ENCODE measurements at regions of chr6 and their contacts with region 1.

Region 1: DNA sequence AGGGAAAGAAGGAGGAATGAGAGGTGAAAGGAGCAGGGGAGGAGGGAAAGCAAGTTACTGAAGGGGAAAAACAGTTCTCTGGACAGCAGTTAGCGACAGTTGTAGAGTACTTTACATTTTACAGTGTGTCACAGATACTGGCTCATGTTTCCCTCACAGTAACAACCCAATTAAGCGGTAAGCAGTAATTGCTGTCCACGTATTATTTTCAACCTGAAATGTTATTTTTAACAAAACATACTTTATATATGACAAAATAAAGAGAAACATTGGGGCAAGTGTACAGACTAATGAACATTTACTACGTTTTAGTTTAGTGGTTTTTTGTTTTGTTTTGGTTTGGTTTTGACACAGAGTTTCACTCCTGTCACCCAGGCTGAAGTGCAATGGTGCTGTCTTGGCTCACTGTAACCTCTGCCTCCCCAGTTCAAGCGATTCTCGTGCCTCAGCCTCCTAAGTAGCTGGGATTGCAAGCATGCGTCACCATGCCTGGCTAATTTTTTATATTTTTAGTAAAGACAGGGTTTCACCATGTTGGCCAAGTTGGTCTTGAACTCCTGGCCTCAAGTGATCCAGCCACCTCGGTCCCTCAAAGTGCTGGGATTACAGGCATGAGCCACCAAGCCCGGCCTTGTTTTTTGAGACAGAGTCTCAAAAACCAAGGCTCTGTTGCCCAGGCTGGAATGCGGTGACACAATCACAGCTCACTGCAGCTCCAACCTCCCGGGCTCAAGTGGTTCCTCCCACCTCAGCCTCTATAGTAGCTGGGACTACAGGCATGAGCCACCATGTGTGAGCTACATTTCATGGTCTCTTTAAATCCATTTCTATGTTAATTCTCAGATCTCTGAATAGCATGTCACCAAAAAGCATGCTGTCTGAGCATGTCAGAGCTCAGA is 22.6 kb upstream of the BTN3A2 start:
- DNase-seq: no peak
- H3K4me3 ChIP-seq: no peak overlapping the region
- H3K4me3 Mint-ChIP-seq: peak overlapping the region; percentile 72
- H3K27ac Mint-ChIP-seq: no peak overlapping the region
- H3K4me1 ChIP-seq: peaks cover 7% of the 10 kb centered on the region; the same call in 1 of the 2 replicates
- H3K4me1 Mint-ChIP-seq: peaks cover 7% of the 10 kb centered on the region
- H3K27me3 ChIP-seq: no peaks in the 10 kb centered on the region
- H3K27me3 Mint-ChIP-seq: no peaks in the 10 kb centered on the region
- CTCF ChIP-seq: no peak

Region 2: GRCh38 chr6:26473758-26474438 is 131.5 kb after region 1 on chr6:
- CTCF ChIA-PET with region 1: interaction called, 12 read pairs
- POLR2A ChIA-PET with region 1: no interaction called
- intact Hi-C with region 1: no loop called
- DNase-seq: peak; percentile 63 to 68
- H3K4me3 ChIP-seq: peak overlapping the region; percentile 39
- H3K4me3 Mint-ChIP-seq: peak overlapping the region; percentile 73
- H3K27ac Mint-ChIP-seq: peak overlapping the region; percentile 77
- H3K4me1 ChIP-seq: peaks cover 40% of the 10 kb centered on the region
- H3K4me1 Mint-ChIP-seq: peaks cover 23% of the 10 kb centered on the region
- H3K27me3 ChIP-seq: no peaks in the 10 kb centered on the region
- H3K27me3 Mint-ChIP-seq: no peaks in the 10 kb centered on the region
- CTCF ChIP-seq: no peak

Region 3: GRCh38 chr6:26520853-26521599 is 178.7 kb after region 1 on chr6:
- CTCF ChIA-PET with region 1: interaction called, 3 read pairs
- POLR2A ChIA-PET with region 1: no interaction called
- intact Hi-C with region 1: loop called (anchors 1 kb)
- DNase-seq: peak; percentile 90 to 91
- H3K4me3 ChIP-seq: peak overlapping the region; percentile 94
- H3K4me3 Mint-ChIP-seq: peak overlapping the region; percentile 92
- H3K27ac Mint-ChIP-seq: peak overlapping the region; percentile 96
- H3K4me1 ChIP-seq: peaks cover 10% of the 10 kb centered on the region
- H3K4me1 Mint-ChIP-seq: peaks cover 35% of the 10 kb centered on the region
- H3K27me3 ChIP-seq: no peaks in the 10 kb centered on the region
- H3K27me3 Mint-ChIP-seq: peaks cover 3% of the 10 kb centered on the region
- CTCF ChIP-seq: no peak

Region 4: DNA sequence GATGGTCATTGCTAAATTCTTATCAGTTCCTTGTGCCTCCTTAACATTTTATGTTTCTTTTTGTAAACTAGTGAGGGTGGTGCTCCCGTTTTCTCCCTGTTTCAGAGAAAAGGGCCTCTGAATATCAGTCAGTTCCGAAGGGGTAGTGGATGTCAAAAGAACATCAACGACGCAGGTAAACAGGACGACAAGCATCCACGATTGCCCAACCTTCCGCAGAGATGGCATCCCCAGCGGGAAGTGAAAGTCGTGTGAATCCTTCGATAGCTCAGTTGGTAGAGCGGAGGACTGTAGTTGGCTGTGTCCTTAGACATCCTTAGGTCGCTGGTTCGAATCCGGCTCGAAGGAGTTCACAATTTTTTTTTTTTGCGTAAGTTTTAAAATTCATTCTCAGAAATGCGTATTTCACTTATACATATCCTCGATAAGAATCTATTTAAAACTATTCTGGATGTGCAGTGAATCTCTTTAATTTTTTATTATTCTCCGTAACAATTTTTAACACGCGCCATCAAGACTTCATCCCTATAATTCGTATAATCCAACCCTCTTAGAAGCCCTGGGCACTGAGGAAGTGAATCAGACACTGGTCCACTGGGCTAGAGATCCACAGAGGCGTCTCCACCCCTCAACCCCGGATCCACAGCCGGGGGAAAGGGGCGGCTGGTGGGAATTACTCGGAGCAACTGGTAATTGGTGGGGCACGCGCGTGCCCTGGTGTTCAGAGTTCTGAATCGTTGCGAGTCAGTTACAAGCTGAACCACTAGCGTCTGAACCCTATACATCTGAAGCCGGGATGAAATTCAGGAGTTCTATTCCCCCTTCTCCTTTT is 226.5 kb after region 1 on chr6:
- CTCF ChIA-PET with region 1: interaction called, 11 read pairs
- POLR2A ChIA-PET with region 1: no interaction called
- intact Hi-C with region 1: loop called (anchors 2 kb)
- DNase-seq: peak; percentile 90 to 96
- H3K4me3 ChIP-seq: peak overlapping the region; percentile 49
- H3K4me3 Mint-ChIP-seq: peak overlapping the region; percentile 95
- H3K27ac Mint-ChIP-seq: peak overlapping the region; percentile 95
- H3K4me1 ChIP-seq: 0 out of 2 replicates have a peak, but pooled peaks cover 5% of the 10 kb centered on the region
- H3K4me1 Mint-ChIP-seq: peaks cover 22% of the 10 kb centered on the region
- H3K27me3 ChIP-seq: no peaks in the 10 kb centered on the region
- H3K27me3 Mint-ChIP-seq: peaks cover 9% of the 10 kb centered on the region
- CTCF ChIP-seq: peak in 1 of 2 experiments; percentile 31